AG04449 (cell line): ENCODE measurements at regions of chr5 and their contacts with region 1.

Region 1: GRCh38 chr5:99025298-99026045 is 96.7 kb upstream of the CHD1 start:
- DNase-seq: no peak
- H3K4me3 ChIP-seq: no peak overlapping the region
- CTCF ChIP-seq: no peak

Region 2: GRCh38 chr5:98905857-98906690 is 119.4 kb before region 1 on chr5:
- CTCF ChIA-PET with region 1: interaction called, 49 read pairs
- POLR2A ChIA-PET with region 1: no interaction called
- DNase-seq: no peak
- H3K4me3 ChIP-seq: no peak overlapping the region
- CTCF ChIP-seq: peak; percentile 21

Region 3: DNA sequence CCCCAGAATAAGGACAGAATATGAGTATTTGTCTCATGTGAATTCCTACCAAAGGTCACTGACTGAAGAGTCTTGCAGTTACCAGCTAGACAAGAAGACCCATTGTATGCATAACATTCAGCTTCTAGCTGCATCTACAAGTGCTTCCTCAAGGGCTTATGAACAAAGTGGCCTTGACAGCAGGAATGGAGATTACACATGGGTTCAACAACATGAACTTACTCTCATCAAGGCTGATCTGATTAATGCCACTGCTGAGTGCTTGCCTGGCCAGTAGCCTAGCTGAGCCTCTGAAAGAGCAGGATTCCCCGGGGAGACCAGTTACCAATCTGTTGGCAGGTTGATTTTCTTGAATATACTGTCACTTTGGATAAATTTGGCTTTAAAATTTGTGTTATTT is 20.0 kb before region 1 on chr5:
- CTCF ChIA-PET with region 1: no interaction called
- POLR2A ChIA-PET with region 1: no interaction called
- DNase-seq: no peak
- H3K4me3 ChIP-seq: no peak overlapping the region
- CTCF ChIP-seq: no peak

Region 4: GRCh38 chr5:99129768-99130501 is 104.5 kb after region 1 on chr5:
- CTCF ChIA-PET with region 1: no interaction called
- POLR2A ChIA-PET with region 1: no interaction called
- DNase-seq: no peak
- H3K4me3 ChIP-seq: no peak overlapping the region
- CTCF ChIP-seq: no peak